ENCODE measurements at regions of chr5 and their contacts with region 1.

Region 1: DNA sequence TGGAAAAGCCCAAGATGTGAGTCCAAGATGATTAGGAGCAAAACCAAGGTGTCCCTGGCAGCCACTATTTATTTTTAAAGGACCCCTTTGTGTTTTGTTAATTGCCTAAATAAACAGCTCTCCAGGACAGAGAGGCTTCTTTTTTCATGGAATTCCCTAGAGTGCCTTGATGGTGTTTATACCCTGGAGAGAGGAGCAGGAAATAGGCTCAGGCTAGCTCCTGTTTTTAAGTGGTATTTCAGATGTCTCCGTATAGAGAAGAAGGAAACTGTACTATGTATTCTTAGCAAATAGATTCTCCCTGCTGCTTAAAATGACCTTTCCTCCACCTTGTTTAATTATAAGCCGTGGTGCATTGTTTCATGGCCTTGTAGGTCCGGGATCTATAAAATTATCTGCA is 292.4 kb downstream of the CD180 start:
- DNase-seq: no peak
- ATAC-seq: no peak
- H3K4me3 ChIP-seq: no peak overlapping the region
- H3K4me3 Mint-ChIP-seq: no peak overlapping the region
- H3K27ac ChIP-seq: no peak overlapping the region
- H3K27ac Mint-ChIP-seq: no peak overlapping the region
- H3K4me1 ChIP-seq: no peaks in the 10 kb centered on the region
- H3K4me1 Mint-ChIP-seq: no peaks in the 10 kb centered on the region
- H3K27me3 ChIP-seq: no peaks in the 10 kb centered on the region
- H3K27me3 Mint-ChIP-seq: peaks cover 2% of the 10 kb centered on the region
- CTCF ChIP-seq: no peak

Region 2: GRCh38 chr5:66874004-66874403 is 30.2 kb before region 1 on chr5:
- CTCF ChIA-PET with region 1: no interaction called
- POLR2A ChIA-PET with region 1: no interaction called
- intact Hi-C with region 1: loop called in 1 of 2 experiments (anchors 1 kb)
- DNase-seq: no peak
- ATAC-seq: no peak
- H3K4me3 ChIP-seq: no peak overlapping the region
- H3K4me3 Mint-ChIP-seq: no peak overlapping the region
- H3K27ac ChIP-seq: no peak overlapping the region
- H3K27ac Mint-ChIP-seq: no peak overlapping the region
- H3K4me1 ChIP-seq: no peaks in the 10 kb centered on the region
- H3K4me1 Mint-ChIP-seq: no peaks in the 10 kb centered on the region
- H3K27me3 ChIP-seq: no peaks in the 10 kb centered on the region
- H3K27me3 Mint-ChIP-seq: peaks cover 2% of the 10 kb centered on the region
- CTCF ChIP-seq: no peak